ENCODE measurements at regions of chr14 and their contacts with region 1.

Region 1: GRCh38 chr14:68911594-68912227 is 67.4 kb downstream of the ACTN1 start:
- DNase-seq: peak; percentile 82
- H3K4me3 Mint-ChIP-seq: no peak overlapping the region
- H3K27ac Mint-ChIP-seq: no peak overlapping the region
- H3K4me1 Mint-ChIP-seq: peaks cover 26% of the 10 kb centered on the region
- H3K27me3 Mint-ChIP-seq: no peaks in the 10 kb centered on the region

Region 2: GRCh38 chr14:68682166-68683103 is 229.3 kb before region 1 on chr14:
- CTCF ChIA-PET with region 1: no interaction called
- POLR2A ChIA-PET with region 1: no interaction called
- intact Hi-C with region 1: no loop called
- DNase-seq: peak; percentile 68
- H3K4me3 Mint-ChIP-seq: no peak overlapping the region
- H3K27ac Mint-ChIP-seq: peak overlapping the region; percentile 83
- H3K4me1 Mint-ChIP-seq: peaks cover 65% of the 10 kb centered on the region
- H3K27me3 Mint-ChIP-seq: no peaks in the 10 kb centered on the region

Region 3: DNA sequence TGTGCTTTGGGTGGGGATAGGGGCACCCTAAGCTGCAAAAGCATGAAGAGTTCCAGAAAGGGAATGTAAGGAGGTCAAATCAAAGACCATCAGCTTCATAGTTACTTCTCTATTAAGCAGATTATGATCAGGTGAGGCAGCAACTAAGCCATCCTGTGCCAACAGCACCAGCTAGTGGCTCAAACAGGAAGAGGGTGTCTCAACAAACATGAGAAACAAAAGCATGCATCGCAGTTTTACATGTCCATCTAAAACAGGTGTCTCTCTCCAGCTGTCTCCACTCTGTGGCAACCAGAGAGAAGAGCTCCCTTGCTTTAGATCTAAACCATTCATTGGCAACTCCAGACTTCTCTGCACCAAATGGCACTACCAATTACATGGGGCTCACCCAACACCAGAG is 14.5 kb after region 1 on chr14:
- CTCF ChIA-PET with region 1: interaction called, 29 read pairs
- POLR2A ChIA-PET with region 1: no interaction called
- intact Hi-C with region 1: no loop called
- DNase-seq: peak; percentile 31
- H3K4me3 Mint-ChIP-seq: no peak overlapping the region
- H3K27ac Mint-ChIP-seq: no peak overlapping the region
- H3K4me1 Mint-ChIP-seq: peaks cover 20% of the 10 kb centered on the region
- H3K27me3 Mint-ChIP-seq: no peaks in the 10 kb centered on the region

Region 4: GRCh38 chr14:68979021-68979782 is 67.5 kb after region 1 on chr14 and contains the start of gene ACTN1:
- CTCF ChIA-PET with region 1: interaction called, 7 read pairs
- POLR2A ChIA-PET with region 1: no interaction called
- intact Hi-C with region 1: loop called (anchors 2 kb)
- DNase-seq: peak; percentile 85
- H3K4me3 Mint-ChIP-seq: peak within 1 kb of the TSS; percentile 84
- H3K27ac Mint-ChIP-seq: peak within 1 kb of the TSS; percentile 78
- H3K4me1 Mint-ChIP-seq: peaks cover 27% of the 10 kb centered on the region
- H3K27me3 Mint-ChIP-seq: peaks cover 4% of the 10 kb centered on the region
- total RNA-seq, gene ACTN1: 70.6 to 72.2 TPM

Region 5: GRCh38 chr14:69055999-69056788 is 144.5 kb after region 1 on chr14:
- CTCF ChIA-PET with region 1: interaction called, 13 read pairs
- POLR2A ChIA-PET with region 1: no interaction called
- intact Hi-C with region 1: no loop called
- DNase-seq: peak; percentile 21
- H3K4me3 Mint-ChIP-seq: no peak overlapping the region
- H3K27ac Mint-ChIP-seq: peak overlapping the region; percentile 20
- H3K4me1 Mint-ChIP-seq: peaks cover 16% of the 10 kb centered on the region
- H3K27me3 Mint-ChIP-seq: no peaks in the 10 kb centered on the region

Region 6: DNA sequence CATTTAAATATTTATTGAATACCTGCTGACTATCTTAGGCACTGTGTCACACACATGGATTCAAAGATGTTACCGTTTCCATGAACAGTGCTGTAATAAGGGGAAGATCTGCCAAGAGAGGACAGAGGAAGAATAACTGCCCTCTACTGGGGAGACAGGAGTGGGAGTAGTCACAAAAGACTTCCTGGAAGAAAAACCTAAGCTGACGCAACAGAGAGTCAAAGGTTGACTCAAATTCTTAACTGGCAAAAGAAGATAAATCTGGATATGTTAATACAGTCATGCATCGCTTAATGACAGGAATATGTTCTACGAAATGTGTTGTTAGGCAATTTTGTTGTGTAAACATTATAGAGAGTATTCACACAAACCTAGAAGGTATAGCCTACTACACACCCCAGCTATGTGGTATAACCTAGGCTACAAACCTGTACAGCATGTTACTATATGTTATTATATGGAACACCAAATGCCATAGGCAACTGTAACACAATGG is 189.7 kb after region 1 on chr14:
- CTCF ChIA-PET with region 1: interaction called, 54 read pairs
- POLR2A ChIA-PET with region 1: no interaction called
- intact Hi-C with region 1: no loop called
- DNase-seq: no peak
- H3K4me3 Mint-ChIP-seq: no peak overlapping the region
- H3K27ac Mint-ChIP-seq: peak overlapping the region; percentile 28
- H3K4me1 Mint-ChIP-seq: peaks cover 13% of the 10 kb centered on the region
- H3K27me3 Mint-ChIP-seq: no peaks in the 10 kb centered on the region

Region 7: DNA sequence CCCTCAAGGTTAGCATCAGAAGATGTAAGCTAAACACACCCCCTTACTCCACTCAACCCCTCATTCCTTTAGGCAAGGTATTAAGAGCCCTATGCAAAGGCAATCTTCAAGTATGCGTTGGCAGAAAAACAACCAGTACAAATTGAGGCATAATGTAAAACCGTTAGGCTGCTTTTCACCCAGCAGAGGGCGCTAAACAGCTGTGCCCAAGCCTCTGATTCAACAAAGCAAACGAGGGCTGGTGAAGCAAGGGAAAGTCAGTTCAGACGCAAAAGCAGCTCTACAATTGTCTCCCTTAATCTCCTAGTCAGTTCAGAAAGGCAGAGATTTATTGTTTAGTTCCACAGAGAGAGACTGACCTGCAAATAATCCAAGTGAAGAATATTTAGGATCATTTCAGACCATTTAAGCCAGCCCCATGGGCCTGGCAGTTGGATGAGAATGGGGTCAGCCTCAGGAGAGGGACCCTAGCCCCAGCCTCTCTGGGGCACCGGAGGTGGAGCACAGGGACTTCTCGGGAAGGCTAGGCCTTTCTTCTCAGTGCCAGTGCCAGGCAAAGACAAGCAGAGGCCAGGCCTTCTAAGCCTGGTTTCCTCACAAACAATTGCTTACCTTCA is 217.7 kb after region 1 on chr14:
- CTCF ChIA-PET with region 1: interaction called, 13 read pairs
- POLR2A ChIA-PET with region 1: no interaction called
- intact Hi-C with region 1: no loop called
- DNase-seq: peak; percentile 81
- H3K4me3 Mint-ChIP-seq: no peak overlapping the region
- H3K27ac Mint-ChIP-seq: peak overlapping the region; percentile 31
- H3K4me1 Mint-ChIP-seq: peaks cover 59% of the 10 kb centered on the region
- H3K27me3 Mint-ChIP-seq: no peaks in the 10 kb centered on the region